Head of caudate nucleus (tissue), 42 donors: ENCODE measurements at regions of chr10 and their contacts with region 1.

Region 1: DNA sequence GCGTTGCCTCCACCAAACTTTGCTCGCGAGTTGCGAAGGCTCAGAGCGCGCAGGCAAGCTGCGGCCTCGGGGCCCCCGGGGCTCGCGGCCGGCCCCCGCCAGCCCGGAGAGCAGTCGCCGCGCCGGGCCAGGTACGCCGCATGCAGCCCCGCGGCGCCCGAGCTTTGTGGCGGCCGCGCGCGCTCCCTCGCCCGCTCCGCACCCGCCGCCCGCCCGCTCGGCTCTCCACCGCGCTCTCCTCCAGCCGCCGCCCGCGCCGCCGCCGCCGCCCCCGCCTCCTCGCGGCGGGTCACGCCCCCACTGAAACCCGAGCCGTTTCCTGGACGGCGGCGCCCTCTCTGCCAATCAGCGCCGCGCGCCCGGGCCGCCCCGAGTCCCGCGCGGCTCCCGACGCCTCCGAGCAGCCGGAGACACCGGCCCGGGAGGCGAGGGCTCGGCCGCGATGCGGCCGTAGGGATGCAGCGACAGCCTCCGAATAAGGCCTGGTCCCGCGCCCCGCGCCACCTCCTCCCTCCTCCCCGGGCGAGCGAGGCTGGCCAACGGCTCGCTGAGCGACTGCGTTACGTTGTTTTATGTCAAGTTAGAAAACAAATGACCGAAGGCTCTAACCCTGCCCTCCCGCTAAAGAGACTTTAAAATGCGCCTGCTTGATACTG is at the start of gene FGFR2:
- DNase-seq: peak; percentile 44 to 93 (median 82)

Region 2: DNA sequence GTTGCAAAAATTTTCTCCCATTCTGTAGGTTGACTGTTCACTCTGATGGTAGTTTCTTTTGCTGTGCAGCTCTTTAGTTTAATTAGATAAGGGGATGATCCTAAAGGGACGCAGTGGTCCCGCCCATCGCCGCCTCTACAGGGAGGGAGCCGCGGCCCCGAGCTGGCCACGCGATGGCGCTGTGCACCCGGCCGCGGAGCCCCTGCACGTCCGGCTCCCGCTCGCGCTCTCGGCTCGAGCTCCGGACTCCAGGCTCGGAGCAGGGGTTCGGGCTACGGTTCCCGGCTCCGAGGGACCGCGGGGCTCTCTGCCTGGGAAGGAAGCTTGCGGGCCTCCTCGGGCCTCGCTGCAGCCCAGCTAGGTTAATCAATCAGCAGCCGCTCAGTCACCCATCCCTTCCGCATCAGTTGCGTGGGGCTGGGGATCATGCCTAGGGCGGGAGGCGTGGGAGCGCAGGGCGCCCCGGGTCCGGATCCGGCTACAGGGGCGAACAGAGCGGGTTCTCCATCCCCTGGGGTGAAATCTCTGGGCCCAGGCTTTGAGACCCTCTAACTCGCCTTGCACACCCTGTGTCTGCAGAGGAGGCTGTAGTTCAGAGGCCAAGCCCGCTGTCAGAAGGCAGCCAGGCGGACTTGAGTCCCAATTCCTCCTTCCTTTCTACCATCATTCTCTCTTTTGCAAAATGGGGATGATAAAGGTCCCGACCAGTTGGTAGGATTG is 649.3 kb before region 1 on chr10:
- intact Hi-C with region 1: loop called (anchors 5 kb)
- DNase-seq: peak; percentile 42 to 91 (median 80)

Region 3: GRCh38 chr10:121188005-121188404 is 410.3 kb before region 1 on chr10:
- intact Hi-C with region 1: loop called (anchors 10 kb)
- DNase-seq: peak in 28 of 42 donors; percentile 18 to 78 (median 48)

Region 4: DNA sequence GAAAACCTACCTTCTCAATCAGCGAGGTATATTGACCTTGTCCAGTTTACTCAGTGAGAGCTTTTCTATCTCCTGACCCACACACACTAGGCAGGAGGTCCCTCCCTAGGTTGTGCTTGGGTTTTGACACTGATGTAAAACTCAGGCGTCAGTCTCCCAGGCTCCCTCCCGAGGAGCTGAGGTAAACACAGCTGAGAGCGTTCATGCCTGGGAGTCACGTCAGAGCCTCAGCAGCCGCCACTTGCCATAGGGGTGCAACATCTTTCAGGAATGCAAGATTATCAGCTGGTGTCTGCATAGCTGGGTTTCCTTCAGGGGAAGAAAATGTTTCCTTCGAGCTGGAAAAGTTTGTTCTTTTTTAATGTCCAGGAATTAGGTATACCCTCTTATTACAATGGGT is 70.7 kb before region 1 on chr10:
- intact Hi-C with region 1: loop called (anchors 5 kb)
- DNase-seq: peak in 3 of 42 donors; percentile 28 to 60 (median 42)